ENCODE measurements at regions of chr17 and their contacts with region 1.

Region 1: DNA sequence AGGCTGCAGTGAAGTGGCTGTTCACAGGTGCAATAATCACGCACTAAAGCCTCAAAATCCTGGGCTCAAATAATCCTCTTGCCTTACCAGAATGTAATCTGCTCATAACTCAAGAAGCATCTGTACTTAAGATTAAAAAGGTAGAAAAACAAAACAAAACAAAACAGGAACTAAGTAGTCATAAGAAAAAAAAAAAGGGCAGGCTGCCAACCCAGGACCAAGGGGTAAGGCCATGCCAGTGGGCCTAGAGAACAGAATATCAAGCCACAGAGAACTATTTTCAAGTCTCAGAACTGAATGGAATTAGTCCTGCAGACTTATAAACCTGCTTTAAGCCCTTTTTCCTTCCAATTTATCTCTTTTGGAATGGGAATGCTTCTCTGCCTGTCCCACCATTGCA is 64.8 kb upstream of the TBC1D3K start:
- DNase-seq: no peak
- ATAC-seq: no peak
- H3K4me3 ChIP-seq: no peak overlapping the region
- H3K27ac ChIP-seq: no peak overlapping the region
- H3K4me1 ChIP-seq: no peaks in the 10 kb centered on the region
- H3K27me3 ChIP-seq: peaks cover 1% of the 10 kb centered on the region
- CTCF ChIP-seq: no peak
- POLR2A ChIP-seq: no peak
- RAD21 ChIP-seq: no peak

Region 2: GRCh38 chr17:36992701-36993100 is 866.8 kb before region 1 on chr17:
- CTCF ChIA-PET with region 1: no interaction called
- POLR2A ChIA-PET with region 1: no interaction called
- dilution Hi-C with region 1: no loop called
- in situ Hi-C with region 1: no loop called
- intact Hi-C with region 1: no loop called
- DNase-seq: no peak
- ATAC-seq: no peak
- H3K4me3 ChIP-seq: no peak overlapping the region
- H3K27ac ChIP-seq: no peak overlapping the region
- H3K4me1 ChIP-seq: peaks cover 2% of the 10 kb centered on the region
- H3K27me3 ChIP-seq: no peaks in the 10 kb centered on the region
- CTCF ChIP-seq: no peak
- POLR2A ChIP-seq: no peak
- RAD21 ChIP-seq: no peak

Region 3: DNA sequence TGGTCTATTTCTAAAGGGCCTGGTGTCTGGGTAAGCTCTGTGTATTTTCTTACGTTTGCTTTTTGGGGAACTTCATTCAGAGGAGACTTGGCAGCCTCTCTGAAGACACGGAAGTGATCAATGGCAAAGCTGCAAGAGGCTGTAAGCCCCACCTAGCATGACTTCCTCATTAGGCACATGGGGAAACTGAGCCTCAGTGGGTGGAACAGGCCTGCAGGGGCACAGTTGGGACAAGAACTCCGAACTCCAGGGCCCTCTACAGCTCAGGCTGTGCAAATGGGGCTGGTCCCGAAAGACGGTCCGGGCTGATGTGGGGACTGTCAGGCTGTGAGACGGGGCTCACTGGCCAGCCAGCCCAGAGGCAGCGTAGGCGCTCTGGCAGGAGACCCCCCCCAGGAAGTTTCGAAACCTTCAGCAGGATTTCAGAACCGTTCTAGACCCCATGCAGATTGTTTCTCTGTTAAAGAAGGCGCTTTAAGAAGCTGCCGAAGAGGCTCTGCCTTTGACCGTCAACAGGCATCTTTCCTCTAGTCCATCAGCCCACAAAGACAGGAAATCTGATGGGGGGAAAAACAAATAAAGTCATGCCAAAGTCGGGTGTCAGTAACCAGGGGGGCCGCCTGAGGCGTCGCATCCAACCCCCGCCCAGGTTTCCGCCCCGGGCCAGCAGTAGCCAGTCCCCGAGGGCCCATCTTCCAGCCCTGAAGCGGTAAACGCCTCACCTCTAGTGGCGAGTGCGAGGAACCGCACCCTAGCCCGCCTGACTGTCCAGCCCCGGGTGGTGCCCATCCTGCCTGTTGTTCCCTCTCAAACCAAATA is 15.1 kb before region 1 on chr17:
- CTCF ChIA-PET with region 1: interaction called, 12 read pairs
- POLR2A ChIA-PET with region 1: no interaction called
- dilution Hi-C with region 1: no loop called
- in situ Hi-C with region 1: no loop called
- intact Hi-C with region 1: no loop called
- DNase-seq: peak; percentile 58
- ATAC-seq: peak; percentile 99
- H3K4me3 ChIP-seq: 0 out of 2 replicates have a peak overlapping the region, but pooled peaks have one; percentile 8
- H3K27ac ChIP-seq: no peak overlapping the region
- H3K4me1 ChIP-seq: 0 out of 2 replicates have a peak, but pooled peaks cover 3% of the 10 kb centered on the region
- H3K27me3 ChIP-seq: peaks cover 6% of the 10 kb centered on the region; the same call in 1 of the 2 replicates
- CTCF ChIP-seq: peak; percentile 85
- POLR2A ChIP-seq: no peak
- RAD21 ChIP-seq: peak; percentile 85

Measured in IMR-90 (cell line).